ENCODE measurements at regions of chr10 and their contacts with region 1.

Region 1: DNA sequence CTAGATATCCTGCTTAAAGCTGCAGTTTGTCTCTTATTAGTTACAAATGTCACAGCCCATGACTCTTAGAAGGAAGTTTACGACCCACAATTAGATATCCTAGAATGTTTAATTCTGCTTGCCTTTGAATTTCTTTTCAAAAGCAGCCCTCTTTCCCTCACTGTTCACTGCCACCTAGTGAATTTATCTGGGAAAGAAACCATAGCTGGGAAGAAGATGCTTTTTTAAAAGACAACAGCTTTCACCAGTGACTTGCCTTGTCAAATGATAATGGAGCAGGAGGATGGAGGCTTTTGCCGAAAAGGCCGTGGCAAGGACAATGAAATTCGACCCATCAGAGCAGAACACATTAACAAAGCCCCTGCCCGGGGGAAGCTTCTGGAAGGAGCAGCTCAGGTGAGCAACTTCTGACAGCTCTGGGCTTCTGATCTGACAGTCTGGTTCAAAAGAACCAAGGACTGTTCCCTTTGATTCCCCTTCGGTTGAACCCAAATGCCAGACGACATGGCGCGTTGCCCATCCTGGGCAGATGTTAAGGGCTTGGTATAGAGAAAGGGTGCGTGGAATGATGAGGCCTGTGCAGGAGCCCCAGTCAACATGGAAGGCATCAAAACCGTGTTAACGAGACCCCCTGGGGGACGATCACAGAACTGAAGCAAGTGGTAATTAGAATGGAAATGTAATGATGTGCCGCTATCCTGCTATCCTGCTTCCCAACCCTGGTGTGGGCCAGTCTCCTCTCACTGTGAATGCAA is 236.8 kb downstream of the FRMD4A start:
- DNase-seq: no peak
- H3K4me3 ChIP-seq: no peak overlapping the region
- H3K27ac ChIP-seq: no peak overlapping the region
- H3K4me1 ChIP-seq: peaks cover 0 to 9% (median 3%) of the 10 kb centered on the region in 4 donors
- H3K27me3 ChIP-seq: no peaks in the 10 kb centered on the region
- CTCF ChIP-seq: peak; percentile 41 to 44

Region 2: DNA sequence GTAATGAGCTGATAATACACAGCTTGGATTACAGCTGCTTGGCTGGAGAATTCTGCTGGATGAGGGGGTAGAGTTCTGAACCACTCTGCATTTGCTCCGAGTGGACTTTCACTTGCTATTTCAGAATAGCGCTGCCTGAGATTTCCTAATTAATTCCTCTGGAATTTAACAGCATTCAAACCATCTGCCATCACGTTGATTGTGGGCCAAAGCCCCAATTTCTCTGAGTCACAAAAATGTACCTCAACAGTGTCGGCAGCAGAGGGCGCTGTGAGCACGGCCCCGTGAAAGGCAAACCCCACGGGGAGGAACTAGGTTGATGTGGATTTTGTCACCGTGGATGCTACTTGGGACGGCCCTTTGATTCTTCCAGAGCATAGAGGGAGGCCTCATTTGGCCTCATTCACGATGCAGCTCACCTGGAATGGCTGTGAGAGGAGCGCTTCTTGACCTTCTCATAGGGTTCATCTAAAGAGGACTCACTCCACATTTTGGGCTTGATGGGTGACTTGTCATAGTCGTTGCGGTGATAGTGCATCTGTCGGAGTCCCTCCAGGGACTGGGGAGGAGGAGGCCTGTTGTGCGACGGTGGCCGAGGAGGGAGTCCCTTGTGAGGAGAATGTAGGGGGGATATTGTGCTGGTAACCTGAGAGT is 433.9 kb before region 1 on chr10:
- intact Hi-C with region 1: loop called (anchors 10 kb)
- DNase-seq: peak; percentile 55 to 80
- H3K4me3 ChIP-seq: no peak overlapping the region
- H3K27ac ChIP-seq: peak overlapping the region in 1 of 2 donors; percentile 45
- H3K4me1 ChIP-seq: peaks cover 0 to 12% (median 0%) of the 10 kb centered on the region in 4 donors
- H3K27me3 ChIP-seq: no peaks in the 10 kb centered on the region
- CTCF ChIP-seq: peak; percentile 89 to 92

Region 3: GRCh38 chr10:14954001-14954770 is 860.3 kb after region 1 on chr10 and contains the start of gene DCLRE1C:
- intact Hi-C with region 1: no loop called
- DNase-seq: peak; percentile 88 to 95
- H3K4me3 ChIP-seq: peak within 1 kb of the TSS; percentile 67 to 76
- H3K27ac ChIP-seq: peak within 1 kb of the TSS; percentile 85 to 86
- H3K4me1 ChIP-seq: peaks cover 0 to 31% (median 15%) of the 10 kb centered on the region in 4 donors
- H3K27me3 ChIP-seq: no peaks in the 10 kb centered on the region
- CTCF ChIP-seq: no peak

Measured in tibial artery (tissue), 4 donors.